Right cardiac atrium (tissue), 5 donors: ENCODE measurements at regions of chr4 and their contacts with region 1.

Region 1: DNA sequence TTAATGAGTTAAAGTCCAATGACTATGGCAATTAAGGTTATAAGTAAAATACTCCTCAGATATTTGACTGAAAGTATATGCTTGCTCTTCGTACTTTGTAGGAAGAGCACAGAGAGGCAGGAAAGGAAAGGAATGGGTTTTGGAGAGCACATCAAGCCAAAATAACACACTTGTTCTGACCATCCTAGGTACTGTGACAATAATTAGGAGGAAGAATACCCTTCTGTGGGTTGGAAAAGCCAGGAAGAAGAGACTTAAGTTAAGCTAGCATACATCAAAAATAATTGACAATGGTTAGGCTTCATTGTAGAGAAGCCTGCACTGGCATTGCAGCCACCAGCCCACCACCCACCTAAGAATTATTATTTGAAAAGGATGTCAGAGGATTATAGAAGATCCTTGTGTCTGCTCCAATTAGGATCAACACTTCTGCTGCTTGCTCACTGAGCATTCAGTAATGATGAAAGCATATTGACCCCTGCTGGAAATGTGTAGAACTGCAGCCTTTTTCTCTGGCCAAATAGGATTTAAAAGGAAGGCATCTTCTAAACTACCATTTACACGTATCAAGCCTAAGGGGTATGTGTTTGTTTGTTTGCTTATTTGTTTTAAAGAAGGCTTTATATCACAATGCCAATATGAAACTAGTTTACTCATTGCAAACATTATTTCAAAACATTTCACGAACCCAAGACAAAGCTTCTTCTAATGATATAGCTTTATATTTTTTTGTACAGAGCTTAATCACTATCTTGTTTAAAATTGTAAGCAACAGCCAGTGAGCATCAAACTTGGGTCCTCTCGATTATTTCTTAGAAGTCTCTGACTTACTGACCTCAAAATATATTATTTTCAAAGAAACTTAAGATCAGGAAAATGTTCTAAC is 286.2 kb upstream of the TET2 start:
- DNase-seq: no peak
- ATAC-seq: peak; percentile 69 to 74
- H3K4me3 ChIP-seq: no peak overlapping the region
- H3K27ac ChIP-seq: no peak overlapping the region
- H3K4me1 ChIP-seq: no peaks in the 10 kb centered on the region
- H3K27me3 ChIP-seq: no peaks in the 10 kb centered on the region

Region 2: DNA sequence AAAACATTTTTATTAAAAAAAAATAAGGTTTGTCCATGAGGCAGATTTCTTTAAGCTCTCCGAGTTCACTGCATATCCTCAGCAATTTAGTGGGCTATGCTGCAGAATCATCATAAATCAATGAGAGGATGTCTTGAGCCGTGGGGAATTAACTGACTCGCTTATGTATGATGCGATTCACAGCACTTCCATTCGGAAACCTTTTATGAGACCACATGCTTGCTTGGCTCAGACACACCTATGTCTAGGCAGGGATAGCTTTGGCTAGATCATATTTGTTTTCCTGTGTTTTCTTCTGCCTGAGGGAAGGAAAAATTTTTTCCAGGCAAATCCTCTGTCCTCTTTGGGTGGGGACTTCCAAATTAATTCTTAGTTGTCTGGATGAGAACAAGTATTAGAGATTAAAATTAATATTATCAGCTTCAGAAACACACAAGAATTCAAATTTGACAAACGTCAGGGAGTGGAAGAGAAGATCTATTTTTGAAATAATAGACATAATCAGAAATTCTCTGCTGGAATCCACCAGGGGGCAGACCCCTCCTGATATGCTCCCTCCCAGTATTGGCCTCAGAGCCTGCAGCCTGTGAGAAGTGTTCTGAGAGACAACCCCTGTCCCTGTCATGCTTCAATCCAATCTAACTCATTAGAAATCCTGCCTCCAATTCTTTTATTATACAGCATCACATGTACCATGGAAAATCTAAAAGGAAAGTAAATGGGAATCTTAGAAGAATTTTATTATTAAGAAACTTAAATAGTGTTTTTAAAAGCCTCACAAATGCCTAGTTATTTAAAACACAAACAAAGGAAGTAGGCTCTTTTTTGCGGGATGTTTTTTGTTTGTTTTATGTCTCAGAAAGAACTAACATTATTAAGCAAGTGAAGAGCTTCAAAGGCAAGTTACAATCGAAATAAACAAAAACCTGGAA is 795.6 kb before region 1 on chr4:
- intact Hi-C with region 1: loop called in 2 of 4 experiments (anchors 2 to 10 kb)
- DNase-seq: peak; percentile 14 to 62 (median 53)
- ATAC-seq: peak; percentile 66 to 69
- H3K4me3 ChIP-seq: no peak overlapping the region
- H3K27ac ChIP-seq: no peak overlapping the region
- H3K4me1 ChIP-seq: no peaks in the 10 kb centered on the region
- H3K27me3 ChIP-seq: no peaks in the 10 kb centered on the region

Region 3: DNA sequence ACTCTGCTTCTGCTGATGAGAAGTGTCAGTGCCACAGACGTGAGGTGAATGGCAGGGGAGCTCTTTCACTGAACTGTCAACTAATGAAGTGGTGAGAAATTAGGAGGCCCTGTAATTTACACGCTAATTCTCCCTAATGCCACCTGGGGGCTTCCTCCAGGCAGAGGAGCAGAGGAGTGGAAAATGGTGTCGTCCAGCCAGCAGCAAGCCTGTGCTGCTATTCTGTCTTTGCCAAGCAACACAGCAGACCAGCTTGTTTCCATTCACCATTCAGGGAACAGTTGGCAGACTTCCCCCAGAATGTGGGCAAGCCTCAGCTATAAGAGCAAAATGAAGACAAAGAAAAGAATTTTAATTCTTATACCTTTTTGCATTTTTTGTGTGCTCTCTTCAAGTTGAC is 41.0 kb after region 1 on chr4:
- intact Hi-C with region 1: no loop called
- DNase-seq: peak in 1 of 3 donors; percentile 37
- ATAC-seq: peak in 1 of 2 donors; percentile 35
- H3K4me3 ChIP-seq: no peak overlapping the region
- H3K27ac ChIP-seq: no peak overlapping the region
- H3K4me1 ChIP-seq: no peaks in the 10 kb centered on the region
- H3K27me3 ChIP-seq: no peaks in the 10 kb centered on the region